ENCODE measurements at regions of chr20 and their contacts with region 1.

Region 1: DNA sequence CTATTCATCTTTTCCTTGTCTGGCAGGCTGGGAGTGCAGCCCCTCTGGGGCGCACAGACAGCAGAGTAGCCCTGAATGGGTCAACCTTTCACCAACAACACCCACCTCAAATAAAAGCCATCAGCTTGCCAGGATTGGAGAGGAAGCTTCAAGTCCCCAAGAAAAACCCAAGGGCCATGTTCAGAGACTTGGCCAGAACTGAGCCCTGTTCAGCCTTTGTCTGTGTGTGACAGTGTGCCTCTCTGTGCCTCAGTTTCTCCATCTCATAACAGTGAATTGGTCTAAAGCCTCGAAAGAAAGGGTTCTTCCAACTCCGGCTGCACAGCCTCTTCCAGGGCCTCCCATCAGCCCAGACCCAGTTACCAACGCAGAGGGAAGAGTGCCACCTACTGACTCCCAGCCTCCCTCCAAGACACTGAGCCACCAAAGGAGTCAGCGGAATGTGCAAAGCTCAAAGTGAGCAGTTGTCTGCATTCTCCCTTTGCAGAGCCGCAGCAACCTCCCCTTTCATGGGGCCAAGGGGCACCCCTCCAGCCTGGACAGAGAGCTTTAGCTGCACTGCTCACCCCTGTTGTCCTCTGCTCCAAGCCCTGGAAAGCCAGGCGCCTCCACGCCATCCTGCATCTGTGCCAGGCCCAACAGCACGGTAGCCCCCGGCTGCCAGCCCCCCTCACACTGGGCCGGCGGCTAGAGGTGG is 82.7 kb upstream of the TOP1 start:
- DNase-seq: peak; percentile 58 to 83 (median 74)
- H3K4me3 ChIP-seq: no peak overlapping the region
- H3K27ac ChIP-seq: no peak overlapping the region
- H3K4me1 ChIP-seq: peaks cover 0 to 14% of the 10 kb centered on the region in 2 donors
- H3K27me3 ChIP-seq: no peaks in the 10 kb centered on the region
- CTCF ChIP-seq: peak; percentile 22 to 70 (median 66)
- POLR2A ChIP-seq: no peak

Region 2: DNA sequence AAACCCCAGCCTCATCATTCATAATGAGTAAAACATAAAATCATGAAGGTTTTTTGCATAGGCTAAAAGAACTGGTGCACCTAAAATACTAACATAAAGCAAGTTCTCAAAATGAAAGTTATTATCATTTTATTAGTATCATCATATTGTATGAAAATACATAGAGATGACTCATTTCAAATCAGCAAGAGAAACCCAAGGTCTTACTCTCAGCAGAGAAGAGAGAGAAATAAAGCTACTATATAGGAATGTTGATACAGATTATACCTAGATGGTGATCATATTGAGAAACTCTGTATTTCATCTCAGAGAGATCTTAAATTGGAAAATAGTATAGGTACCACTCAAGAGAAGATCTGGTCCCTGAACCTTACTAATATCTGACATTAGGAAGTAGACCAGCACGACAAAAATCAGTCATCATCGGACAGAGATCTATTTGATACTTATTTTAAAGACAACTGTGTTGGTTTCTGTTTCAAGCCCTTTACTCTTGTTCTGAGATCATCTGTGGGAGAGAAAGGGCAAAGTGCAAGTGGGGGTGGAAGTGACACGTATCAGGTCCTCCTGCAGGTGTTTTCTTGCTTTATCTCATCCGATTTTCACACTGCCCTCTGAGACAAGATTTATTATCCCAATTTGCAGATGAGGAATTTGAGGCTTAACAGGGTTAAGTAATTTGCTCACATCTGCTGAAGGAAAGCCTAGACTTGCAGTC is 789.1 kb before region 1 on chr20:
- intact Hi-C with region 1: no loop called
- DNase-seq: no peak
- H3K4me3 ChIP-seq: no peak overlapping the region
- H3K27ac ChIP-seq: no peak overlapping the region
- H3K4me1 ChIP-seq: no peaks in the 10 kb centered on the region
- H3K27me3 ChIP-seq: no peaks in the 10 kb centered on the region
- CTCF ChIP-seq: no peak
- POLR2A ChIP-seq: no peak

Region 3: DNA sequence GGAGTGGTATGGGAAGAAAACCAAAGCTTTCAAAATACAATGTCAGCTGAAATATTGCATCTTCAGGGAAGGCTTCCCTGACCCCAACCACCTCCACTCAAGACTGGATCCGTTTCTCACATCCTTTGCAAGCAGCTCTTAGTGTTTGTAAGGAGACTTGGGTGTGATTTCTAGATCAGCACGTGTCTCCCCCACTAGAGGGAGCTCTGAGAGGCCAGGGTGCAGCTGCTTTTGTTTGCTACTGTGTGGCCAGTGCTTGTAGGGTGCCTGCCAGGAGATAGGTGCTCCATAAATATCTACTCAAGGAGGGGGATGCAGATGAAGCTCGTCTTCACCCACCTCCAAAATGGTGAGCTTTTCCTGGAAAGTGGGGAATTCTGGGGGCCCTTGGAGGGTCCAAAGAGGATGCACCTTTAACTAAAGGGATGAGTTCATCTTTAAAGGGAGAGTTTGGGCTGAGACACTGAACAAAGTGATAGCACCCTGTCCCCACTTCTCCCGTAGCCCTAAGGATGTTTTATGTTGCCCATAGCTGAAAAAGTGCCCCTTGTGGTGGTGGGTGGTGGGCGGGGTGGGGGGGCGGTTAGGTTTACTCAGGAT is 204.3 kb before region 1 on chr20:
- intact Hi-C with region 1: loop called (anchors 5 to 10 kb)
- DNase-seq: peak; percentile 43 to 77 (median 55)
- H3K4me3 ChIP-seq: no peak overlapping the region
- H3K27ac ChIP-seq: no peak overlapping the region
- H3K4me1 ChIP-seq: no peaks in the 10 kb centered on the region
- H3K27me3 ChIP-seq: no peaks in the 10 kb centered on the region
- CTCF ChIP-seq: peak; percentile 24 to 63 (median 57)
- POLR2A ChIP-seq: no peak

Region 4: DNA sequence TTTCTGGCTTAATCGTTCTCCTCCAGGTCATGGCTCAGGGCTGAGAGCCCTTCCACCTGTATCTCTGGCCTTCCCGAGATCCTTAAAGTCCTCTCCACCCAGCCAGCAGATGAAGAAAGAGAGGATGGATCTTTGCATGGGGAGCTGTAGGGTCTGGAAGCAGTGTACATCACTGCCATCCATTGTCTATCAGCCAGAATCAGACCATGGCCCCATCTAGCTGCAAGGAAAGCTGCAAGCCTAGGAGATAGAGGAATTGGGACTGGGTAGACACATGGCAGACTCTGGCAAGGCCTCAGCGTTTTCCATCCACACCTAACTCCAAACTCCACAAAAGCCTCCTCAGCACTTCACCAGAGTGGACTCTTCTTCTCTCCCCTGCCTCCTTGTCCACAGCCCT is 143.0 kb before region 1 on chr20:
- intact Hi-C with region 1: loop called in 1 of 2 experiments (anchors 5 kb)
- DNase-seq: peak in 1 of 7 donors; percentile 2
- H3K4me3 ChIP-seq: no peak overlapping the region
- H3K27ac ChIP-seq: no peak overlapping the region
- H3K4me1 ChIP-seq: no peaks in the 10 kb centered on the region
- H3K27me3 ChIP-seq: peaks cover 2% of the 10 kb centered on the region
- CTCF ChIP-seq: no peak
- POLR2A ChIP-seq: no peak

Region 5: DNA sequence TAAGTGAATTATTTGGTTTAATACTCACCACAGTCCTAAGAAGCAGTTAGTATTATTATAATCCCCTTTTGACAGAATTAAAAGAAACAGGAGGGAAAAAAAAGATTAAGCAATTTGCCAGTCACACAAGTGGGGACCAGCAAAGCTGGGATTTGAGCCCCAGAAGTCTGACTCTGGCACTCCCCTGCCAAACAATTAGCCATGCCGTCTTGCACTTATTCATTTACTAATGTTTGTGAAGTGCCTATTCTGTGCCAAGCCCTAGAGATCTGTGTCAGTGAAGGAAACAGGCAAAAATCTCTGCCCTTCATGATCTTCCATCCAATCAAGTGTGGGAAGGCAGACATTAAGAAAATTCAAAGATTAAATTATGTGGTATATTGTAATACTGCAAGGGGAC is 43.2 kb before region 1 on chr20:
- intact Hi-C with region 1: no loop called
- DNase-seq: no peak
- H3K4me3 ChIP-seq: no peak overlapping the region
- H3K27ac ChIP-seq: no peak overlapping the region
- H3K4me1 ChIP-seq: no peaks in the 10 kb centered on the region
- H3K27me3 ChIP-seq: no peaks in the 10 kb centered on the region
- CTCF ChIP-seq: no peak
- POLR2A ChIP-seq: no peak